ENCODE measurements at regions of chr12 and their contacts with region 1.

Region 1: GRCh38 chr12:52713960-52714886 is 10.9 kb upstream of the KRT77 start:
- DNase-seq: no peak
- H3K4me3 Mint-ChIP-seq: no peak overlapping the region
- H3K27ac Mint-ChIP-seq: no peak overlapping the region
- H3K4me1 Mint-ChIP-seq: no peaks in the 10 kb centered on the region
- H3K27me3 Mint-ChIP-seq: peaks cover 25% of the 10 kb centered on the region
- CTCF ChIP-seq: no peak

Region 2: DNA sequence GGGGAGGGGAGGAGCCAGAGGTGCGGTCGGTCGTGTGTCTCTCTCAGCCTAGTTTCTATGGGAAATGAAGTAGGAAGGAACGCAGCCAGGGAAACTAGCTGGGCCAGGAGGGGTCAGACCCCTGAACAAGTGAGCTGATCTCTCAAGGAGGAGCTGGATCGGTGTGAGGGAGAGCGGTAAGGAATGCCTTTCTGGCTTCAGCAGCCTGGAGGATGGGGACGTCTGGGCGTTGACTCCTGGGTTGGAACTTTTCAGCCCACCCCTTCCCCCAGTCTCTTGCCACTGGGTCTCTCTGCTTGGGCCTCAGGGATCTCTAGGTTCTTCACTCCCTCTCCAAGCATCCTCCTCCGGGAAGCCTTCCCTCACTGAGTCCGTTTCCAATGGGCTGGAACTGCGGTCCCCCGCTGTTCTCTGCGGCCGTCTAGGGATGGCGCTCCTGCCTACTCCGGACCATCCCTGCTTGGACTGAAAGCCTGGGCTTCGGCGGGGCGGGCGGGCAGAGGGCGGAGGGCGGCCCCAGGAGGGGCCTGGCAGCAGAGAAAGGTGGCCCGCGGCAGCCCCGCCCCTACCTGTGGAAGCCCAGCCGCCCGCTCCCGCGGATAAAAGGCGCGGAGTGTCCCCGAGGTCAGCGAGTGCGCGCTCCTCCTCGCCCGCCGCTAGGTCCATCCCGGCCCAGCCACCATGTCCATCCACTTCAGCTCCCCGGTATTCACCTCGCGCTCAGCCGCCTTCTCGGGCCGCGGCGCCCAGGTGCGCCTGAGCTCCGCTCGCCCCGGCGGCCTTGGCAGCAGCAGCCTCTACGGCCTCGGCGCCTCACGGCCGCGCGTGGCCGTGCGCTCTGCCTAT is 481.4 kb before region 1 on chr12 and contains the start of gene KRT7:
- CTCF ChIA-PET with region 1: no interaction called
- POLR2A ChIA-PET with region 1: no interaction called
- intact Hi-C with region 1: no loop called
- DNase-seq: peak; percentile 92
- H3K4me3 Mint-ChIP-seq: peak within 1 kb of the TSS; percentile 91
- H3K27ac Mint-ChIP-seq: peak within 1 kb of the TSS; percentile 91
- H3K4me1 Mint-ChIP-seq: peaks cover 67% of the 10 kb centered on the region
- H3K27me3 Mint-ChIP-seq: no peaks in the 10 kb centered on the region
- CTCF ChIP-seq: peak; percentile 33
- total RNA-seq, gene KRT7: 2,379 and 3,360 TPM in 2 replicates

Region 3: GRCh38 chr12:52598966-52599365 is 115.3 kb before region 1 on chr12:
- CTCF ChIA-PET with region 1: no interaction called
- POLR2A ChIA-PET with region 1: no interaction called
- intact Hi-C with region 1: loop called (anchors 10 kb)
- DNase-seq: no peak
- H3K4me3 Mint-ChIP-seq: no peak overlapping the region
- H3K27ac Mint-ChIP-seq: no peak overlapping the region
- H3K4me1 Mint-ChIP-seq: no peaks in the 10 kb centered on the region
- H3K27me3 Mint-ChIP-seq: peaks cover 38% of the 10 kb centered on the region
- CTCF ChIP-seq: no peak

Region 4: DNA sequence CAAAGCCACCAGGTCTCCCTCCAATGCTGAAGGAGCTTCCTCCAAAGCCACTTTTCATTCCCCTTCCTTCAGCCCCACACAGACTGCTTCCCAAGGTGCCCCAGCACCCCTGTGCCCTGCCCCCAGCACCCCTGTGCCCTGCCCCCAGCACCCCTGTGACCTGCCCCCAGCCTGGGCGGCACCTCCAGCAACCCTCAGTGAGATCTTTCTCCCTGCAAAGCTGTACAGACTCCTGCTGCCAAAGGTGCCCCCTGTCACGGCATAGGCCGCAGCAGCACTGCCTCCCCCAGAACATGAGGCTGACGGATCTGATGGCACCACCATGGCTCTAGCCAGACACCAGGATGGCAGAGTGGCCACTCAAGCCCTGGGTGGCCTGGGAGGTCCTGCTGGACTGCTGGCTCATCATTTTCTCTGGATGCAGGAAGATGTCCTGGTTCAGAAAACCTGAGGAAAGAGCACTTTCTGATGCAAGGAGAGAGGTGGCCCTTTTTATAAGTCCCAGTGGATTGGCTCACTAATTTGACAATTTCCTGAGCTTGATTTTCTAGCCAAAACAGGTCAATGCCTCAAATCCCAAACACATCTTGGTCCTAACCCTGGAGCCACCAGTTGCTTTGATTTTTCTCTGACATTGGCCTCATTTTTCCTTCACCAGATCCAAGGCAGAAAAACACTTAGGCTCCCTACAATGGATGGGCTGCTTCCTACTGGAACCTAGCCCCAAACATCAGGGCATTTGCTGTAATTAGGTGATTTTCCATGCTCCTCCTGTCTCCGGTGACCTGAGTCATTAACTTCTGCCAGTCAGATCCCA is 21.8 kb after region 1 on chr12:
- CTCF ChIA-PET with region 1: no interaction called
- POLR2A ChIA-PET with region 1: no interaction called
- intact Hi-C with region 1: no loop called
- DNase-seq: no peak
- H3K4me3 Mint-ChIP-seq: no peak overlapping the region
- H3K27ac Mint-ChIP-seq: no peak overlapping the region
- H3K4me1 Mint-ChIP-seq: no peaks in the 10 kb centered on the region
- H3K27me3 Mint-ChIP-seq: peaks cover 60% of the 10 kb centered on the region
- CTCF ChIP-seq: no peak

Region 5: GRCh38 chr12:52799062-52799761 is 85.0 kb after region 1 on chr12:
- CTCF ChIA-PET with region 1: no interaction called
- POLR2A ChIA-PET with region 1: no interaction called
- intact Hi-C with region 1: no loop called
- DNase-seq: peak; percentile 61
- H3K4me3 Mint-ChIP-seq: no peak overlapping the region
- H3K27ac Mint-ChIP-seq: no peak overlapping the region
- H3K4me1 Mint-ChIP-seq: peaks cover 27% of the 10 kb centered on the region
- H3K27me3 Mint-ChIP-seq: peaks cover 13% of the 10 kb centered on the region
- CTCF ChIP-seq: no peak

Region 6: DNA sequence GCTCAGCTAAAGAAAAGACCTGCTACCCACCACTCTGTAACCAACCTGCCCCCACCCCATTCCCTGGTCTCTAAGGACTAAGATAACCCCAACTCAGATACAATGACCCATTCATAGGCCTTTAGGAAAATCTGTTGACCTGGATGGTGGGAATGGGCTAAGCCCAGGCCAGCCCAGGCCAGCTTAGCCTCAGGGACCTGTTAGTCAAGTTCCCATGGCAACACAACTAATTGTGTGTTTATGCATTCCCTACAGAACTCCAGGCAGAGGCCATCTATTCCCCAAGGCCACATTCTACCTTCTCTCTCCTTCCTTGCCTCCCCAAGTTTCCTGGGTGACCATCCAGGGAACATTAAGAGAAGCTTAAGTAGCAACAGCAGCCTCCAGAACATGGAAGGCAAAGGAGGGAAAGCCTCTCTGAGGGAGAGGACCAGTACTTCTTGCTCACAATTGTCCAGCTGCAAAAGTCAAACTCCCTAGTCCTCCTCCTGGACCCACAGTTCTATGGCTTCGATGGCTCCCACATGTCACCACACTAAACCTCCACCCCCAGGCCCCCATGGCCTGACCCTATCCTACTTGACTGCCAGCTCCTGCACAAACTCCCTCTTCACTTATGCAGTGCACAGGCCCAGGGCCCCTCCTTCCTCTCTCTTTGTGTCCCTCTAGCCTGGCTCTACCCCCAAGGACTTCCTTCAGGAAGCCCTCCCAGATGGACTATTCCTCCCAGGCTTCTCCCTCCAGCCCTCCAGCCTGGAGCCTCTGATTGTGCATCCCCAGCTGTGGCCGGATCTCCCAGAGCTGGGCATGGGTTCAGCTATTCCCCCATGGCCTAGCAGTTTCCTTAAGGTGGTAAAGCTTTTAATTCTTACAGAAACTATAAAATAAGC is 207.0 kb after region 1 on chr12:
- CTCF ChIA-PET with region 1: no interaction called
- POLR2A ChIA-PET with region 1: no interaction called
- intact Hi-C with region 1: no loop called
- DNase-seq: no peak
- H3K4me3 Mint-ChIP-seq: no peak overlapping the region
- H3K27ac Mint-ChIP-seq: no peak overlapping the region
- H3K4me1 Mint-ChIP-seq: peaks cover 8% of the 10 kb centered on the region
- H3K27me3 Mint-ChIP-seq: peaks cover 14% of the 10 kb centered on the region
- CTCF ChIP-seq: no peak

Measured in MCF 10A (cell line).